ENCODE measurements at regions of chr4 and their contacts with region 1.

Region 1: GRCh38 chr4:40205259-40206198 is 8.7 kb downstream of the RHOH start:
- DNase-seq: peak; percentile 69
- H3K4me3 Mint-ChIP-seq: peak overlapping the region; percentile 93
- H3K27ac Mint-ChIP-seq: peak overlapping the region; percentile 98
- H3K4me1 Mint-ChIP-seq: peaks cover 61% of the 10 kb centered on the region
- H3K27me3 Mint-ChIP-seq: no peaks in the 10 kb centered on the region

Region 2: DNA sequence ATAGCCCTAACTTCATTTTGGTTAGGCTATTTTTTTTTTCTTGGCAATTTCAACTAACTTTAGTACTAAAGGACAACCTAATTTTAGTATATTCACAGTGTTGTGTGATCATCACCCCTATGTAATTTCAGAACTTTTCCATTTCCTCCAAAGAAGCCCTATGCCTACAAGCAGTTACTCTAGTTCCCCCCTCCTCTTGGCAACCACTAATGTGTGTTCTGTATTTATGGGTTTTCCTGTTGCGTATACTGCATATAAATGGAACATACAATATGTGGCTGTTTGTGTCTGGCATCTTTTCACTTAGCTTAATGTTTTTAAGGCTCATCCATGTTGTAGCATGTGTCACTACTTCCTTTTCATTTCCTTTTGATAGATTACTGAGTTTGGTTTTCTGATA is 91.3 kb before region 1 on chr4:
- CTCF ChIA-PET with region 1: no interaction called
- POLR2A ChIA-PET with region 1: no interaction called
- intact Hi-C with region 1: no loop called
- DNase-seq: no peak
- H3K4me3 Mint-ChIP-seq: no peak overlapping the region
- H3K27ac Mint-ChIP-seq: no peak overlapping the region
- H3K4me1 Mint-ChIP-seq: no peaks in the 10 kb centered on the region
- H3K27me3 Mint-ChIP-seq: no peaks in the 10 kb centered on the region

Region 3: GRCh38 chr4:40238700-40239548 is 33.4 kb after region 1 on chr4:
- CTCF ChIA-PET with region 1: interaction called, 4 read pairs
- POLR2A ChIA-PET with region 1: interaction called, 32 read pairs
- intact Hi-C with region 1: loop called (anchors 1 kb)
- DNase-seq: peak; percentile 91
- H3K4me3 Mint-ChIP-seq: peak overlapping the region; percentile 75
- H3K27ac Mint-ChIP-seq: peak overlapping the region; percentile 96
- H3K4me1 Mint-ChIP-seq: peaks cover 88% of the 10 kb centered on the region
- H3K27me3 Mint-ChIP-seq: no peaks in the 10 kb centered on the region

Measured in activated CD4-positive, alpha-beta memory T cell treated with anti-CD3 and anti-CD28 coated beads for 36 hours (primary cell).